Prostate gland (tissue), 2 donors: ENCODE measurements at regions of chr11 and their contacts with region 1.

Region 1: GRCh38 chr11:123580557-123581275 is 73.7 kb downstream of the SCN3B start:
- DNase-seq: peak; percentile 35
- H3K4me3 ChIP-seq: no peak overlapping the region
- H3K27ac ChIP-seq: no peak overlapping the region
- H3K4me1 ChIP-seq: no peaks in the 10 kb centered on the region
- H3K27me3 ChIP-seq: no peaks in the 10 kb centered on the region
- CTCF ChIP-seq: peak; percentile 74 to 81 (median 77)
- POLR2A ChIP-seq: no peak

Region 2: GRCh38 chr11:123511037-123511870 is 69.5 kb before region 1 on chr11:
- intact Hi-C with region 1: loop called (anchors 2 kb)
- DNase-seq: peak; percentile 74
- H3K4me3 ChIP-seq: no peak overlapping the region
- H3K27ac ChIP-seq: no peak overlapping the region
- H3K4me1 ChIP-seq: no peaks in the 10 kb centered on the region
- H3K27me3 ChIP-seq: no peaks in the 10 kb centered on the region
- CTCF ChIP-seq: peak; percentile 41 to 75 (median 68)
- POLR2A ChIP-seq: no peak

Region 3: DNA sequence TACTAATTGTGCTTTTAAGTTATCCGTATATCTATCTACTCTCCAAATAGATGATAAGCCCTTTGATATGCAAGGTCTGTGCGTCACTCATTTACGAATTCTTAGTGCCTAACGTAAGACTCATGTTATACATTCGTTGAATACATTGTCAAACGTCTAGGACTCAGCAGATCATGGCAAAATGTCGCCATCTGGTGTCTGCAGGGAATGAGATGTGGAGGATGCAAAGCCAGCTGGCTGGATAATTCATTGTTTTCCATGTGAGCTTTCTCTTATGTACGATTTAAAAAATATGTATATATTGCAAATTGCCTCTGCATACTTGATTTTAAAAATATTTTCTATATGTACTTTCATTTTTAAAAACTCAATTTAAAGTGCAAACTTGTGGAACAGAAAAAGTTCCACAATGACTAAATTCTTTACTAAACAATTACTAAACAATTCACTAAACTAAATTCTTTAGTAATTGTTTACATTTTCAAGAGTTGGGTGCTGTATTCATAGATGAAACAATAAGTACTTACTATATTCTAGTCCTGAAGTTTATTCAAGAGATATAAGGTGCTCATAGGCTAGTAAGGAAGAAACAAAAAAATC is 127.0 kb after region 1 on chr11:
- intact Hi-C with region 1: loop called (anchors 5 kb)
- DNase-seq: peak; percentile 33
- H3K4me3 ChIP-seq: no peak overlapping the region
- H3K27ac ChIP-seq: no peak overlapping the region
- H3K4me1 ChIP-seq: no peaks in the 10 kb centered on the region
- H3K27me3 ChIP-seq: no peaks in the 10 kb centered on the region
- CTCF ChIP-seq: peak in 3 of 4 experiments; percentile 65 to 72 (median 69)
- POLR2A ChIP-seq: no peak